Mammary epithelial cell (primary cell): ENCODE measurements at regions of chr7 and their contacts with region 1.

Region 1: GRCh38 chr7:41977151-41977651 is 259.8 kb downstream of the GLI3 start:
- DNase-seq: peak; percentile 41
- H3K4me3 ChIP-seq: no peak overlapping the region
- H3K27ac ChIP-seq: no peak overlapping the region
- H3K4me1 ChIP-seq: no peaks in the 10 kb centered on the region
- H3K27me3 ChIP-seq: no peaks in the 10 kb centered on the region
- CTCF ChIP-seq: peak; percentile 82 to 85

Region 2: GRCh38 chr7:41930538-41931262 is 46.5 kb before region 1 on chr7:
- CTCF ChIA-PET with region 1: no interaction called
- dilution Hi-C with region 1: loop called (anchors 5 kb)
- in situ Hi-C with region 1: no loop called
- intact Hi-C with region 1: no loop called
- DNase-seq: peak; percentile 48
- H3K4me3 ChIP-seq: no peak overlapping the region
- H3K27ac ChIP-seq: no peak overlapping the region
- H3K4me1 ChIP-seq: peaks cover 5% of the 10 kb centered on the region
- H3K27me3 ChIP-seq: no peaks in the 10 kb centered on the region
- CTCF ChIP-seq: no peak

Region 3: DNA sequence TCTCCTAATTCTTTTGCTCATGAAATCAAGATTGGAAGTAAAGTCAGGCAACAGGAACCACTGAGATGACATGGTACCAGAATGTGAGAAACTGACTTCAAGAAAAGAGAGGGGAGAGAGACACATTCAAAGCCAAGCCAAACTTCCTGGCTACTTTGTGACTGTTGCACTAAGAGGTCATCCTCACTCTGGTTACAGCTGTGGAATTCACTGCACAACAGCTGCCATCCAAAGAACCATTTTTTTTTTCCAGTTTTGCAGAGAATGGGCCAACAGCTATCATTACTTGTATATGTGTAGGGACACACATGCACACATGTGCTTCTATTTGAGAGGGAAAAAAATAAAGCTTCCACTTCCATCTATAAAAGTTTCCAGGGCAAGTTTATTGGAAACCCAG is 56.3 kb after region 1 on chr7:
- CTCF ChIA-PET with region 1: no interaction called
- dilution Hi-C with region 1: loop called (anchors 5 kb)
- in situ Hi-C with region 1: no loop called
- intact Hi-C with region 1: no loop called
- DNase-seq: no peak
- H3K4me3 ChIP-seq: no peak overlapping the region
- H3K27ac ChIP-seq: no peak overlapping the region
- H3K4me1 ChIP-seq: no peaks in the 10 kb centered on the region
- H3K27me3 ChIP-seq: no peaks in the 10 kb centered on the region
- CTCF ChIP-seq: no peak

Region 4: DNA sequence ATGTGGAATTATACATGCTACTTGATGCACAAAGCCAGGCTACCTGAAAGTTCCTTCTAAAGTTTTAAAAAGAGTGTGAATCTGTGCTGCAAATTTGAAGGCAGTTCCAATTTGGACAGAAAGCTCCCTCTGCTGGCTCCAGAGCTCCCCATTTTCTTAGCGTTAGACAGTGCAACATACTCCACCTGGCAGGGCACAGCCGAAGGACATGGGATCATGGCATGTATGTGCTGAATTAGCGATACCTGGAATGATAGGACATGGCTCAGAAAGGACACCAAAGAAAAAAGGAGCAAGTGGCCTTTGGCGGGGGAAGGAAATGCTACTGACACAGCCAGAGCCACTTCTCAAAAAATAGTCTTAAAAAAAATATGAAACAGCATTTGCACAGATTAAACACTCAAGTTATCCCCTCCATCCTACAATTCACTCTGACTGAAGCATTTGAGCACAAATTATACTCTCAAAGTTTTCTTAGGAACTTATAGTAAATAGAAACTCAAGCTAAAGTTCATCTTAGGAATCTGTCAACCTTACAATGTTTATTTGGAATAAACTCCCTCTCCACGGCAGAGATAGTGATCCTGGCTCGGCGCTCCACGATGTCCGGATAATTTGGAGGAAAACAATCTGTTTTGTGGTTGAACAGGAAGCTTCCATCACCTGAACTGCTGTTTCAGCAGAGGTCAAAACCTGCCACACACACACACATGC is 854.7 kb after region 1 on chr7:
- CTCF ChIA-PET with region 1: interaction called, 3 read pairs
- dilution Hi-C with region 1: no loop called
- in situ Hi-C with region 1: no loop called
- intact Hi-C with region 1: loop called (anchors 2 kb)
- DNase-seq: peak; percentile 30
- H3K4me3 ChIP-seq: no peak overlapping the region
- H3K27ac ChIP-seq: no peak overlapping the region
- H3K4me1 ChIP-seq: no peaks in the 10 kb centered on the region
- H3K27me3 ChIP-seq: no peaks in the 10 kb centered on the region
- CTCF ChIP-seq: peak; percentile 60 to 90